Gastrocnemius medialis (tissue), 4 donors: ENCODE measurements at regions of chr1 and their contacts with region 1.

Region 1: DNA sequence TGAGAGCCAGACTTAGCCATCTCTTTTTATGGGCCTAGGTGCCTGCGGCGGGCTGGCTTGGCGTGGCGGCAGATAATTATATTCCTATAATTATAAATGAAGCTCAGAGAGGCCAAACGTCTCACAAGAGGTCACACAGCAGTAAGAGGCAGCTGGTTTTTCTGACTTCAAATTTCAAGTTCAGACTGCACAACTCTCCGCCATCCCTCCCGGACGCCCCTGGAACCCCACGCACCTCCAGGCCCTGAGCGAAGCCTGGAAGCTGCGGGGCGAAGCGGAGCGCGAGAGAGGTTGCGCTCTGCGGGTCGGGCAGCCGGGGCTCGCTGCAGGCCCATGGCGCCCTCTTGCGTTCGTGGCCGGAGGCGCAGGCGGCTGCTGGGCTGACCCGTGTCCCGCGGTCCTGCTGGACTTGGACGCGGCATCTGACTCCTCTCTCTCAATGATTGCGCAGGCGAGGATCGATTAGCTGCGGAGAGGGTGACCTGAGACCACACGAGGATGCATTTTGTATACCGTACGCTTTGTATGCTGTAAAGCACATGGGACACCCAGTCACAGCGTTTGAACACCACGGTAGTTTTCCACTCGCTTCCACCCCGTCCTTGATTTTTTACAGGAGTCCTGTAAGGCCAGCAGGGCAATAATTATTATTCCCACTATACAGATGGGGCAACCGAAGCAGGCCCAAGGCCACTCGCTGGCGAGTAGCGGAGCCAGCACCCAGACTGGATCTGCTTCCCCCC is 272.7 kb downstream of the FOXD2 start:
- DNase-seq: peak; percentile 38 to 52
- ATAC-seq: peak; percentile 79 to 81
- H3K4me3 ChIP-seq: peak overlapping the region; percentile 42 to 62 (median 52)
- H3K27ac ChIP-seq: no peak overlapping the region
- H3K4me1 ChIP-seq: peaks cover 9 to 16% of the 10 kb centered on the region in 2 donors
- H3K27me3 ChIP-seq: peaks cover 58 to 68% (median 66%) of the 10 kb centered on the region in 3 donors
- CTCF ChIP-seq: peak; percentile 86 to 99 (median 94)
- POLR2A ChIP-seq: no peak

Region 2: DNA sequence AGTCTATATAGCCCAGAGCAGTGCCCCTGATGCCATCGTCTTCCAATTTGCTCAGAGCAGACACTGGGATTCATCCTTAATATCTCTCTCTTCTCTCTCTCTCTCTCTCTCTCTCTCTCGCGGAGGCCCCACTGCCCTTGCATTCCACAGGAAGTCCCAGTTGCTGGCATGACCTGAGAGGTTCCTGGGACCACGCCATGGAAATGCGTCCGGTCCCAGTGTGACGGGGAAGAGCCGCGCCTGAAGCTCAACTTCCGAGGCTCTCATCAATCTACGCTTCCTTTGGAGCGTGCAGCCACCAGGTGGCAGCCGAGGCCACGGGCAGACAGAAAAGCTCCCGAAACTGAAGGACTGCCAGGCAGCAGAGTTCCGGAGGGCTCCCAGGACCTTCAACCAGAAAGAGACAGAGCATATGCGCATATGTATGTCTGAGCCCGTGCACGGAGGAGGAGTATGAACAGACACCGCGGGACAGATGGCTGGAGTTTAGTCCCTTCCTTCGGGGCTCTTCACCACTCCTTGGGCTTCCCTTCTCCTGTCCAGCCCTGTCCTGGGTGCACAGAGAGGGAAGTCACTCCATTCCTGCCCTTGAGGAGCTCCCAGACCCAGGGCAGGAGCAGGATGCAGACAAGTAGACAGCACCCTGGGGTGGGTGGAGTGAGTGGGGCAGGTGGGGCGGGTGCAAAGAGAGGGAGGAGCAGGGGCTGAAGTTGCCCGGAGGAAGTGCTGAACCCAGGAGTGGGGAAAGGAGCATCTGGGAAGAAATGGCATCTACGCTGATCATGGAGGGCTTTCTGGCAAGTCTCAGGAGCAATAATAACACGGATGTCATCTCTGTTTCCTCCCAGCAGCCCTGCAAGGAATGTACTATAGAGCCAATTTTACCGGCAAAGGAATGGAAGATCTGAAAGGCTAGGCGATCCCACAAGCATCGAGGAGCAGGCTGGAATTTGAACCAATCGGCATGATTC is 531.2 kb before region 1 on chr1:
- in situ Hi-C with region 1: loop called (anchors 10 to 25 kb)
- intact Hi-C with region 1: loop called (anchors 5 kb)
- DNase-seq: peak; percentile 65 to 84
- ATAC-seq: peak; percentile 83 to 92
- H3K4me3 ChIP-seq: peak overlapping the region; percentile 35 to 64 (median 50)
- H3K27ac ChIP-seq: peak overlapping the region in 2 of 4 donors; percentile 16 to 32
- H3K4me1 ChIP-seq: peaks cover 9 to 13% of the 10 kb centered on the region in 2 donors
- H3K27me3 ChIP-seq: peaks cover 0 to 9% (median 5%) of the 10 kb centered on the region in 3 donors
- CTCF ChIP-seq: peak; percentile 79 to 94 (median 88)
- POLR2A ChIP-seq: no peak

Region 3: GRCh38 chr1:47424336-47424982 is 286.0 kb before region 1 on chr1:
- in situ Hi-C with region 1: loop called in 2 of 4 experiments (anchors 10 to 25 kb)
- intact Hi-C with region 1: no loop called
- DNase-seq: no peak
- ATAC-seq: no peak
- H3K4me3 ChIP-seq: no peak overlapping the region
- H3K27ac ChIP-seq: no peak overlapping the region
- H3K4me1 ChIP-seq: no peaks in the 10 kb centered on the region
- H3K27me3 ChIP-seq: peaks cover 0 to 11% (median 11%) of the 10 kb centered on the region in 3 donors
- CTCF ChIP-seq: peak; percentile 21 to 60 (median 40)
- POLR2A ChIP-seq: no peak

Region 4: GRCh38 chr1:47437447-47438164 is 272.9 kb before region 1 on chr1 and contains the start of gene FOXD2:
- in situ Hi-C with region 1: loop called in 2 of 4 experiments (anchors 10 to 25 kb)
- intact Hi-C with region 1: loop called (anchors 2 kb)
- DNase-seq: peak; percentile 57 to 66
- ATAC-seq: peak; percentile 89 to 93
- H3K4me3 ChIP-seq: peak within 1 kb of the TSS; percentile 71 to 95 (median 74)
- H3K27ac ChIP-seq: peak within 1 kb of the TSS; percentile 69 to 78 (median 72)
- H3K4me1 ChIP-seq: peaks cover 8 to 17% of the 10 kb centered on the region in 2 donors
- H3K27me3 ChIP-seq: peaks cover 59 to 81% (median 78%) of the 10 kb centered on the region in 3 donors
- CTCF ChIP-seq: peak; percentile 83 to 99 (median 97)
- POLR2A ChIP-seq: peak; percentile 48 to 52
- total RNA-seq, gene FOXD2: 0.11 TPM in 1 of 4 donors, not detected in the others

Region 5: DNA sequence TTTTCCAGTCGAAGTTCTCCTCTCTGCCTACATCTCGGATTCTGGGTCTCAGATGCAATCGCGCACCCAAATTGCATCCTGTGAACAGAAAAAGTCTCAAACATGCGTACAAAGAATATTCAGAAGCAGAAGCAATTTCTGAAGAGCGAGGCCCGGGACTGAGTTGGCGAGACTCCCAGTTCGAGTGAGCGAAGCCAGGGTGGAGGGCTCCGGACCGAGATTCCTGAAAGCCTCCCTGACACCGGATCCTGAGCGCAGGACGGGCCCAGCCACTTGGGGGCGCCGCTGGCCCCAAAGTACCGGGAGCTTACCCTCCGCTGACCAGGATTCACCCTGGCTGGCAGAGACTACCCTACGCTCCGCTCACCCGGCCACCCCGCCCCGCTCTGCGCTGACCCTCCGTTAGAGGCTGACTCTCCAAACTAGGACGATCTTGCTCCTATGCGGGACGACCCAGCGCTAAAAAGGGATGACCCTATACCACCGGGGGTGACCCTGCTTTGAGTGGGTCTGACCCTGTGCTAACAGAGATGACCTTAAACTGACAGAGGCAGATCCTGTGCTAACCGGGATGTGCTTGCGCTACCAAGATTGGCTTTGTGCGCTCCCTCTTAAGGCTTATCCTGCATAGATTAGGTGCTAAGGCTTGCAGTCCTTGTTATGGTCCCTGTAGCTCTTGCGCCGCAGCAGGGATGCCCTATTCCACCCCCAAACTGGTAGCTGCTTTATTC is 260.5 kb before region 1 on chr1:
- in situ Hi-C with region 1: loop called in 3 of 4 experiments (anchors 10 to 25 kb)
- intact Hi-C with region 1: no loop called
- DNase-seq: no peak
- ATAC-seq: peak in 1 of 2 donors; percentile 36
- H3K4me3 ChIP-seq: no peak overlapping the region
- H3K27ac ChIP-seq: no peak overlapping the region
- H3K4me1 ChIP-seq: peaks cover 1 to 2% of the 10 kb centered on the region in 2 donors
- H3K27me3 ChIP-seq: peaks cover 49 to 72% (median 55%) of the 10 kb centered on the region in 3 donors
- CTCF ChIP-seq: peak in 4 of 5 experiments; percentile 27 to 46 (median 34)
- POLR2A ChIP-seq: no peak

Region 6: GRCh38 chr1:47527658-47528255 is 182.7 kb before region 1 on chr1:
- in situ Hi-C with region 1: loop called in 2 of 4 experiments (anchors 10 kb)
- intact Hi-C with region 1: loop called (anchors 1 kb)
- DNase-seq: no peak
- ATAC-seq: peak; percentile 56 to 60
- H3K4me3 ChIP-seq: no peak overlapping the region
- H3K27ac ChIP-seq: no peak overlapping the region
- H3K4me1 ChIP-seq: peaks cover 0 to 2% of the 10 kb centered on the region in 2 donors
- H3K27me3 ChIP-seq: peaks cover 0 to 6% (median 5%) of the 10 kb centered on the region in 3 donors
- CTCF ChIP-seq: peak; percentile 26 to 56 (median 43)
- POLR2A ChIP-seq: no peak

Region 7: DNA sequence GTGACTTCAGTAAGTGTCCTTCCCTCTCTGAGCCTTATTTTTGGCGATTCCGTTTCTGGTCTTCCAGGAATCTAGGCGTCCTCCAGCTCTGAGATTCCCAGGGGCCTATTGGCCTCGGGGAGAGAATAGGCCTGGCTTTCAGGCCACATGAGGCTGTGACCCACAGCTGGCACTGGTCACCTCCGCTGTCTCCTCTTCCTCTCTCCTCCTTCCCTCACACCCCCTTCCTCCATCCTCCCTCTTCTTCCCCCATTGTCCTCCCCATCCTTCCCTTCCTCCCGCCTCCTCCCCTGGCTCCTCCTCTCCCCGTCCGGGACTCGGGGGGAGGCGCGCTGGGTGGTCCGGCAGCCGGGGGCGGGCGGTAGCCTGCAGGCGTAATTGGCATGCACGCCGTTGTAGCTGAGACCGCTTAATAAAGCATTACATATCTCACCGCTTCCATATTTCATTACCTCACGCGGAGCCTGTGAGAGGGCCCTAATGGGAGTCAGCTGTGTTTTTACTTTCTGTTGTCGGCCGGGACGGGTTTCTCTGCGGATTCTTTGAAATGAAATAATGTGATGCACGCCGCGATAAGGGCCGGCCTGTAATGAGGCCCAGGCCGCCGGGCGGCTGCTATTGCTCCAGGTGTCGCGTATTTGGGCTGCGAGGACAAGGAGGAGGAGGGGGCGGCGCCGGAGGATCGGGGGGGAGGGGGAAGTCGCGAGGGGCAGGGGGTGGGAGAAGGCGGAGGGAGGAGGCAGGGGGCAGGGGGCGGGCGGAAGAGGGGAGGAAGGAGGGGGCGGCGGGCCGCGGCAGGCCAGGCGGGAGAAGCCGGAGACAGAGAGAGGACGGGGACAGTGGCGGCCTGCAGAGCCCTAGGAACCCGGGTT is 177.3 kb before region 1 on chr1:
- in situ Hi-C with region 1: loop called in 2 of 4 experiments (anchors 10 kb)
- intact Hi-C with region 1: no loop called
- DNase-seq: no peak
- ATAC-seq: peak; percentile 32 to 44
- H3K4me3 ChIP-seq: peak overlapping the region; percentile 46 to 59 (median 55)
- H3K27ac ChIP-seq: peak overlapping the region in 2 of 4 donors; percentile 29 to 40
- H3K4me1 ChIP-seq: peaks cover 8 to 15% of the 10 kb centered on the region in 2 donors
- H3K27me3 ChIP-seq: peaks cover 0 to 11% (median 5%) of the 10 kb centered on the region in 3 donors
- CTCF ChIP-seq: no peak
- POLR2A ChIP-seq: no peak